Spleen (tissue), 13 donors: ENCODE measurements at regions of chr16 and their contacts with region 1.

Region 1: GRCh38 chr16:72832621-72833248 is 215.2 kb downstream of the ZFHX3 start:
- DNase-seq: peak; percentile 93
- H3K4me3 ChIP-seq: no peak overlapping the region
- H3K27ac ChIP-seq: no peak overlapping the region
- H3K4me1 ChIP-seq: peaks cover 0 to 15% (median 0%) of the 10 kb centered on the region in 6 donors
- H3K27me3 ChIP-seq: no peaks in the 10 kb centered on the region
- CTCF ChIP-seq: peak; percentile 80 to 96 (median 92)
- POLR2A ChIP-seq: no peak

Region 2: DNA sequence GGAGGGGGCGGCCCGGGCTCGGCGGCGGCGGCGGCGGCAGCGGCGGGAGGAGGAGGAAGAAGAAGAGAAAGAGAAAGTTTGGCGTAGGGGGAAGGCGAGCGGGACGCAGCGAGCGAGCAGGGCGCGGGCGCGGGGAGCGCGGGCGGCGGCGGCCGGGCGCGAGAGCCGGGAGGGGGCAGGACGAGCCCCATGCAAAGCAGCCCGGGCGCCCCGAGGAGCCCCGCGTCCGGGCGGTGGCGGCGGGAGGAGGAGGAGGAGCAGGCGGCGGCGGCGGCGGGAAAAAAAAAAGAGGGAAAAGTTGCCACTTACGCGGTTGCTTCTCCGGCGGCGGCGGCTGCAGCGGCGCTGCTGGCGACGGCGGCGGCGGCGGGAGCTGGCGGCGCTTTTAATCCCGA is 225.5 kb after region 1 on chr16:
- intact Hi-C with region 1: loop called (anchors 10 kb)
- DNase-seq: peak; percentile 89
- H3K4me3 ChIP-seq: peak overlapping the region; percentile 39 to 92 (median 73)
- H3K27ac ChIP-seq: peak overlapping the region; percentile 48 to 91 (median 88)
- H3K4me1 ChIP-seq: peaks cover 9 to 85% (median 46%) of the 10 kb centered on the region in 6 donors
- H3K27me3 ChIP-seq: peaks cover 0 to 58% (median 16%) of the 10 kb centered on the region in 7 donors
- CTCF ChIP-seq: no peak
- POLR2A ChIP-seq: no peak

Region 3: GRCh38 chr16:73202161-73202729 is 369.5 kb after region 1 on chr16:
- intact Hi-C with region 1: loop called (anchors 10 kb)
- DNase-seq: no peak
- H3K4me3 ChIP-seq: no peak overlapping the region
- H3K27ac ChIP-seq: no peak overlapping the region
- H3K4me1 ChIP-seq: no peaks in the 10 kb centered on the region
- H3K27me3 ChIP-seq: no peaks in the 10 kb centered on the region
- CTCF ChIP-seq: no peak
- POLR2A ChIP-seq: no peak

Region 4: GRCh38 chr16:73878611-73879010 is 1045.9 kb after region 1 on chr16:
- intact Hi-C with region 1: loop called (anchors 10 kb)
- DNase-seq: no peak
- H3K4me3 ChIP-seq: no peak overlapping the region
- H3K27ac ChIP-seq: no peak overlapping the region
- H3K4me1 ChIP-seq: peaks cover 0 to 3% (median 0%) of the 10 kb centered on the region in 6 donors
- H3K27me3 ChIP-seq: peaks cover 0 to 9% (median 0%) of the 10 kb centered on the region in 7 donors
- CTCF ChIP-seq: peak in 7 of 11 experiments; percentile 14 to 47 (median 23)
- POLR2A ChIP-seq: no peak